Activated CD4-positive, alpha-beta T cell treated with anti-CD3 and anti-CD28 coated beads, Interleukin-2, amount 10 ng/mL, durations not matched to agents 7 days and 5 days (primary cell): ENCODE measurements at regions of chr14 and their contacts with region 1.

Region 1: DNA sequence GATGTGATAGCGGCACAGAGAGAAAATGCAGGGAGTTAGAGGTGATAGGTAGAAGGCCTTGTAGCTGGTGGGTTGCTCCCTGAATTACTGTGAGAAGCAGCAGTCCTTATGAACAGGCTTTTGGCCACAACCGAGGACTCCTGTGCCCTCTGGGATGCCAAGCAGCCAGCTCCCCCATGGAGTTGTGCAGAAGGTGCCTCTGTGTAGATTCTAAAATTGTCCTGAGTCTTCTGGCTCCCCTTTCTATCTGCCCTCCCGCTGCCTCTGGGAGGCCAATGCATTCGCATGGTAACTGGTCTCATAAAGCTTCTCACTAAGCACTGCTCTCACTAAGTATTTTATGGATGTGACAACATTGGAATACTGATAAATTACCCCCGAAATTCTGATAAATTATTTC is 16.1 kb upstream of the SUSD6 start:
- DNase-seq: no peak
- H3K4me3 Mint-ChIP-seq: no peak overlapping the region
- H3K27ac Mint-ChIP-seq: no peak overlapping the region
- H3K4me1 Mint-ChIP-seq: no peaks in the 10 kb centered on the region
- H3K27me3 Mint-ChIP-seq: no peaks in the 10 kb centered on the region

Region 2: GRCh38 chr14:69606258-69607184 is 11.2 kb after region 1 on chr14:
- CTCF ChIA-PET with region 1: interaction called, 17 read pairs
- POLR2A ChIA-PET with region 1: no interaction called
- DNase-seq: no peak
- H3K4me3 Mint-ChIP-seq: no peak overlapping the region
- H3K27ac Mint-ChIP-seq: no peak overlapping the region
- H3K4me1 Mint-ChIP-seq: peaks cover 22% of the 10 kb centered on the region
- H3K27me3 Mint-ChIP-seq: no peaks in the 10 kb centered on the region